Right ventricle myocardium inferior (tissue), 1 donor: ENCODE measurements at regions of chr5 and their contacts with region 1.

Region 1: GRCh38 chr5:142145106-142145900 is 36.7 kb downstream of the NDFIP1 start:
- DNase-seq: no peak
- ATAC-seq: peak; percentile 91

Region 2: DNA sequence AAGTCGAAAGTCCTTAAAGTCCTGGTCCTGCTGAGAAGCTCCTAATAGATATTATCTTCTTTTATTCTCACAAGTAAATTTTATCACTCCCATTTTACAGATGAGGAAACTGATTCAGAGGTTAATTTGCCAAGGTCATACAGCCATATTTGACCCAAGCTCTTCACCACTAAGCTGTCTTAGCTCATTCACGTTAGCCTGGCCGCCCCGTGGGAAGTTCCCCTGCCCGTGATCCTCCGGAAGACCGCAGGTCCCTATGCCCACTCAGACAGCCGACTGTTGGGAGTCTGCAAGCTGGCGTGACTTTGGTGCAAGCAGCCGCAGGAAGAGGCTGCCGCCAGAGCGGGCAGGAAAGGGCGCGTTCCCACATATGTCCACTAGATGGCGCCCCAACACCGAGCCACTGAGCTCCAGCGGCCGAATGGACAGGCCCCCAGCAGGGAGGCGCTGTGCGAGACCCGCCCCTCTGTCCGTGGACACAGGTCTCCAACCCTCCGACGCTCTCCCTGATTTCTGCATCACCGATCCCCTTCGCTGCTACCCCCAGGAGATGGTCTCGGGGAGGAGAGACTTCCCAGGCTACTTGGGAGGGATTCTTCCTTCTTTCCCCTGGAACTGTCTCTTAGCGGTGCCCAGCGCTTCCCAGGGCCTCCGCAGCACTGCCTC is 453.3 kb before region 1 on chr5:
- intact Hi-C with region 1: loop called (anchors 5 kb)
- DNase-seq: peak; percentile 93
- ATAC-seq: peak; percentile 88

Region 3: DNA sequence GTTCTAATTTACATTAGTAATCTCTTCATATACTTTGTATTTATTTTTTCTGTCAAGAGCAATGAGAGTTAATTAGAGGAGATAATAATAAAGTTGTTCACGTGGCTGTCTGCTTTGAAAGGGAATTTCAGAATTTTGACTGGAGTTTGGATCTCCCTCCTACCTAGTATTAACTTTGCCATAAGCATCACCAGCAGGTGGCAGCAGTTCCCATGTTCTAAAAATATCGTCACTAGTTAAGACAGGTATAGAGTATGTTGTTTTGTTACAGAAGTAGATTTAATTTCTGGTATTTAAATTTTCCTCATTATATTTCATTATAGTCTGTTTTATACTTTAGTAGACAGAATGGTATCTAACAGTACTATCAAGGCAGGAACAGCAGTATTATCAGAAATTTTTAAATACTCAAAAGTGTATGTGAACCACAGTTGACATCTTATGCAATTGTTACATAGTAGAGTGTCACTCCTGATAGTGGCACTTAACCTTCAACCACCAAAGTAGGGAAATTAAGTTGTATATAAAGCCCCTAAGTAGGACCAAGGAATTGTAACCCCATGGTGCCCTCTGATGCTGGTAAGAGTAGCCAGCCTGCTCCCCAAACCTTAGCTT is 152.8 kb before region 1 on chr5:
- intact Hi-C with region 1: loop called (anchors 2 kb)
- DNase-seq: no peak
- ATAC-seq: peak; percentile 64

Region 4: GRCh38 chr5:142375944-142376411 is 230.7 kb after region 1 on chr5:
- intact Hi-C with region 1: no loop called
- DNase-seq: no peak
- ATAC-seq: no peak